ENCODE measurements at regions of chr9 and their contacts with region 1.

Region 1: GRCh38 chr9:15433191-15433590 is 10.5 kb downstream of the SNAPC3 start:
- DNase-seq: no peak
- H3K4me3 ChIP-seq: no peak overlapping the region
- H3K27me3 ChIP-seq: no peaks in the 10 kb centered on the region
- CTCF ChIP-seq: no peak

Region 2: GRCh38 chr9:15461601-15462000 is 28.4 kb after region 1 on chr9:
- CTCF ChIA-PET with region 1: no interaction called
- POLR2A ChIA-PET with region 1: interaction called, 10 read pairs
- DNase-seq: no peak
- H3K4me3 ChIP-seq: no peak overlapping the region
- H3K27me3 ChIP-seq: no peaks in the 10 kb centered on the region
- CTCF ChIP-seq: no peak